ENCODE measurements at regions of chr10 and their contacts with region 1.

Region 1: DNA sequence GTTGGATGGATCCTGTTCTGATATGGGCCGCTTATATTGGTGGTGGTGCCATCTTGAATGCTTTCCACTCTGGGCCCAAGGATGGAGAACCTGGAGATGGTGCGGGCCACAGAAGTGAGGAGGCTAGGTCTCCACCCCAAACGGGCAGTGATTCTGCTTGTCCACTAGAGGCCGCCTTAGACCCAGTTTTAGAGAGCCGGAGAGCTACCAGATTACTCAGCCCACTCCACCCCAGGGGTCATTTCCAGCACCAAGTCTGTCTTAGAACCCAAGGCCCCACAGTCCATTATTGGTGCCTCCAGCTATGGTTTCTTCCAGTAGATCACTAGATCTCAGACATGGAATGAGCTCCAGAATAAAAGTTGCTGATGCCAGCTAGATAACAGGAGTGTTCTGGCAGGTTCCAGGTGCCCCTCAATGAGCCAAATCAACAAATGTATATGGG is 11.8 kb upstream of the CAMK2G start:
- H3K4me3 ChIP-seq: no peak overlapping the region
- H3K27ac ChIP-seq: no peak overlapping the region
- H3K4me1 ChIP-seq: peaks cover 11% of the 10 kb centered on the region
- CTCF ChIP-seq: peak; percentile 92

Region 2: GRCh38 chr10:73827346-73828089 is 58.6 kb before region 1 on chr10:
- CTCF ChIA-PET with region 1: no interaction called
- POLR2A ChIA-PET with region 1: no interaction called
- H3K4me3 ChIP-seq: no peak overlapping the region
- H3K27ac ChIP-seq: no peak overlapping the region
- H3K4me1 ChIP-seq: no peaks in the 10 kb centered on the region
- CTCF ChIP-seq: no peak

Region 3: DNA sequence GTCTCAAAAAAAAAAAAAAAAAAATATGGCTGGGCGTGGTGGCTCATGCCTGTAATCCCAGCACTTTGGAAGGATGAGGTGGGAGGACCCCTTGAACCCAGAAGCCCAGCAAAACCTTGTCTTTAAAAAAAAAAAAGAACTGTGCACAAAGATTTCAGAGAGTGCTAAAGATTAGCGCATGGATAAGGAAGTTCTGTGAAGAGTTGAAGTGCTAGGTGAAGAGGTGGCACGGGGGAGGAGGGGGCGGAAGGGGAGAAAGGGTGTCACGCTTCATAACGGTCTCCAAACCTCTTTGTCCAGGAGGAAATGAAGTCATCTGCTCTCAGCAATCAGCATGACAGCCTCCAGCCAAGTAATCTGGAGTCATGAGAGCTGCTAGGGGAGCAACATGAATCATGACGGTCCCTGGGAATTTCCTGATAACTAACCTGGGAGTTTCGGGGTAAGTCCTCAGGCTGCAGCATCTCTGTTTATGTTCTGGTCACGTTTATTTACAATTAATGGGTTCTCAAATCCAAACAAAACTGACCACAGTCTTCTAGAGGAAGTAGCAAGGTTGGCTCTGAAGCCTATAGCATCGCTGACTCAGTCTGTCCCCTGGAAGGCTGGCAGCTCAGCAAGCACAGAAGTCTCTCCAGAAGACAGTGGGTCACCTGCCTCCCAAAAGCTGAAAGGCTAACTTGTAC is 22.9 kb after region 1 on chr10:
- CTCF ChIA-PET with region 1: interaction called, 16 read pairs
- POLR2A ChIA-PET with region 1: no interaction called
- H3K4me3 ChIP-seq: no peak overlapping the region
- H3K27ac ChIP-seq: no peak overlapping the region
- H3K4me1 ChIP-seq: no peaks in the 10 kb centered on the region
- CTCF ChIP-seq: no peak

Region 4: DNA sequence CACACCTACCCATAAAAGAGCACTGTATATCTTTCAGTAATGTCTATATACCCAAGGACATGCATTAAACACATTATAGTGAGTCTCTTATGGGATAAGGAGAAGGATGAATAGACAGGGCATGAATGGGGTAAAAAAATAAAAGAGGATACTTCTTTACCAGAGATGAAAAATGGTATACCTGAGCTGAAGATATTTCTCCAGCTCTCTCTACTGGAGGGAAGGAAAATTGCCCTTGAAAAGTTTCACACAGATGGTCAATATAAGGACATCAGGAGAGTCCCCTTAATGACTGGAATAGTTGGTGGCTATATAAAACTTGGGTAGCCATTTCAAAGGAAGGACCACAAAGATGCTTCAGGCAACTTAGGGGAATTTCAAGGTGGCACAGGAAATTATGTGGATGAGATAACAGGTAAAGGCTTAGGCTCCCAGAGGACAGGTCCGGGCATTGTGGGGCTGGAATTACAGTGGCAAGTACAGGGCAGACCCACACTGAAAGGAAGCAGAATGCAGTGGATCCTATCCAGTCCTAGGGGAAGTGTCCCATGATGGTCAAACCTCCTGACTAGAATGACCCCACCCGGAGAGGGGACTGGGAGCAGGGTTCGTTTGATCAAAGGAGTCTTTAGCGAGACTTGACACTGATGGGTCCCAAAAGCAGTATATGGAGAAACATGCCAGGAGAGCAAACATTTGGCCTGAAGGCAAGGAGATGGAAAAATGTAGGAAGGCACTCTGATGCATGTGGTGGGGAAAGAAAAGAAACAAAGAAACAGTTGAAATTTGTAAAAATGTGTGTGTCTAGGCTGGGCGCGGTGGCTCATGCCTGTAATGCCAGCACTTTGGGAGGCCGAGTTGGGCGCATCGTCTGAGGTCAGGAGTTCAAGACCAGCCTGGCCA is 60.4 kb after region 1 on chr10:
- CTCF ChIA-PET with region 1: interaction called, 182 read pairs
- POLR2A ChIA-PET with region 1: no interaction called
- H3K4me3 ChIP-seq: no peak overlapping the region
- H3K27ac ChIP-seq: no peak overlapping the region
- H3K4me1 ChIP-seq: no peaks in the 10 kb centered on the region
- CTCF ChIP-seq: no peak

Region 5: GRCh38 chr10:74081192-74081803 is 195.2 kb after region 1 on chr10:
- CTCF ChIA-PET with region 1: interaction called, 79 read pairs
- POLR2A ChIA-PET with region 1: no interaction called
- H3K4me3 ChIP-seq: no peak overlapping the region
- H3K27ac ChIP-seq: no peak overlapping the region
- H3K4me1 ChIP-seq: peaks cover 10% of the 10 kb centered on the region
- CTCF ChIP-seq: peak; percentile 62; the same call in 1 of the 2 replicates